ENCODE measurements at regions of chr1 and their contacts with region 1.

Region 1: GRCh38 chr1:108719656-108720435 is 7.1 kb downstream of the FNDC7 start:
- DNase-seq: no peak
- H3K4me3 ChIP-seq: no peak overlapping the region
- H3K27ac ChIP-seq: no peak overlapping the region
- H3K4me1 ChIP-seq: peaks cover 0 to 5% (median 0%) of the 10 kb centered on the region in 4 experiments; a peak in 1 of 7 replicates
- H3K27me3 ChIP-seq: no peaks in the 10 kb centered on the region
- CTCF ChIP-seq: no peak
- EP300 ChIP-seq: no peak
- POLR2A ChIP-seq: no peak
- RAD21 ChIP-seq: no peak

Region 2: GRCh38 chr1:108708691-108709660 is 10.9 kb before region 1 on chr1:
- CTCF ChIA-PET with region 1: interaction called, 29 read pairs
- POLR2A ChIA-PET with region 1: interaction called, 6 read pairs
- DNase-seq: peak in 1 of 2 experiments; percentile 74
- H3K4me3 ChIP-seq: no peak overlapping the region
- H3K27ac ChIP-seq: no peak overlapping the region
- H3K4me1 ChIP-seq: no peaks in the 10 kb centered on the region
- H3K27me3 ChIP-seq: no peaks in the 10 kb centered on the region
- CTCF ChIP-seq: peak; percentile 59 to 85 (median 85)
- EP300 ChIP-seq: no peak
- POLR2A ChIP-seq: no peak
- RAD21 ChIP-seq: peak; percentile 51 to 69